ENCODE measurements at regions of chr17 and their contacts with region 1.

Region 1: DNA sequence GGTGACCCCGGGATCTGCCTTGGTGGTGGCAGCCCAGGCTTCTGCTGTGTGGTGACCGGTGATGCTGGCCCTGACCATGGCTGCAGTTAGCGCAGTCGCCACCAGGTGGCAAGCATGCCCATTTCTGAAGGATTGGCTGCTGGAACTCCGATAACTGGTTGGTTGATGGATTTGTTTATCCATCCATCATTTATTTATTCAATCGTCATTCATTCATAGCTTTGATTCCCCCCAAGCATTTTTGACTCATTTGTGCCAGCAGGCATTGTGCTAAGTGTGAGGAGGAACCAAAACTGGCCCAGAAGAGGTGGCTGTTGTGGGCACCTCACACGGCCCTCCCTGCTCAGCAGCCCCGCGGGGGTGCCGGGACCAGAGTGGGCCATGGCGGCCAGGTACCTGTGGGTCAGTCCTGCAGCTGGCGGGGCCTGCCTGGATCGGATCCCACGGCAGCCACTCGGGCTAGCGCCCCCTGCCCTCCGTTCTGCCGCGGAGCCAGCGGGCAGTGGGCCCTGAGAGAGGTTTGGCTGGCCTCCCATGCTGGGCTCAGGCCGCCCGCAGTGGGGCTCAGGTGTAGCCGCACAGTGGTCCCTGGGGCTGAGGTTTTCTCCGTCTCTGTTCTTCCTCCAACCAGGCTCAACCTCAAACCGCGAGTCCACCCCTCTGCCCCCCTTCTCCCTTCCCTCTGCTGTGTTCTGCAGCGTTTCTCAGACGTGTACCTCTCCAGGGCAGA is 28.8 kb upstream of the ITGA3 start:
- DNase-seq: peak; percentile 79 to 87
- ATAC-seq: peak; percentile 75 to 89 (median 82)
- H3K4me3 ChIP-seq: peak overlapping the region in 5 of 10 donors; percentile 13 to 37 (median 28)
- H3K27ac ChIP-seq: peak overlapping the region in 1 of 10 donors; percentile 36
- H3K4me1 ChIP-seq: peaks cover 5 to 33% (median 18%) of the 10 kb centered on the region in 9 donors
- H3K27me3 ChIP-seq: peaks cover 0 to 20% (median 6%) of the 10 kb centered on the region in 7 donors
- CTCF ChIP-seq: peak; percentile 89 to 98 (median 94)

Region 2: GRCh38 chr17:50055426-50056230 is 28.6 kb after region 1 on chr17 and contains the start of gene ITGA3:
- intact Hi-C with region 1: loop called in 2 of 10 experiments (anchors 1 to 2 kb)
- DNase-seq: peak; percentile 75 to 78
- ATAC-seq: peak; percentile 56 to 77 (median 72)
- H3K4me3 ChIP-seq: peak within 1 kb of the TSS; percentile 61 to 97 (median 80)
- H3K27ac ChIP-seq: peak within 1 kb of the TSS; percentile 57 to 97 (median 90)
- H3K4me1 ChIP-seq: peaks cover 27 to 85% (median 71%) of the 10 kb centered on the region in 9 donors
- H3K27me3 ChIP-seq: peaks cover 0 to 38% (median 0%) of the 10 kb centered on the region in 7 donors
- CTCF ChIP-seq: peak in 1 of 9 donors; percentile 2
- total RNA-seq, gene ITGA3: 12.5 to 44.2 (median 22.5) TPM

Region 3: GRCh38 chr17:50066995-50067394 is 39.9 kb after region 1 on chr17:
- intact Hi-C with region 1: no loop called
- DNase-seq: no peak
- ATAC-seq: no peak
- H3K4me3 ChIP-seq: no peak overlapping the region
- H3K27ac ChIP-seq: peak overlapping the region in 7 of 10 donors; percentile 22 to 97 (median 91)
- H3K4me1 ChIP-seq: peaks cover 26 to 58% (median 49%) of the 10 kb centered on the region in 9 donors
- H3K27me3 ChIP-seq: no peaks in the 10 kb centered on the region
- CTCF ChIP-seq: no peak

Region 4: DNA sequence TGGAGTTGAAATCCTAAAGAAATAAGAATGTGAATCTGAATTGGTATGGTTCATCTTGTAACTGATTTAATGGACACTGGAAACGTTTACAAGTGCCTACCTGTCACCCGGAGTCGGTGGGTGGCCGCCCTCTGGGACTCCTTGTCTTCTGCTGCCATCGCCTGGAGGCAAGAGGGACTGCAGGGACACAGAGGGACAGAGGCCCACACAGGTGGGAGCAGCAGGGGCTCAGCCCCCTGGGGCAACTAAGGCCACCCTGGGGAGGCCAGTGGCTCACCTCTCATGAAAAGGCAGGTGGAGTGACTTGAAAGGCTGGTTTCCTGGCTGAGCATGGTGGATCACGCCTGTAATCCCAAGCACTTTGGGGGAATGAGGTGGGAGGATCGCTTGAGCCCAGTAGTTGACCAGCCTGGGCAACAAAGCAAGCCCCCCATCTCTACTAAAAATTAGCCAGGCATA is 270.4 kb after region 1 on chr17:
- intact Hi-C with region 1: loop called in 4 of 10 experiments (anchors 5 to 10 kb)
- DNase-seq: peak; percentile 71 to 77
- ATAC-seq: peak; percentile 81 to 96 (median 92)
- H3K4me3 ChIP-seq: no peak overlapping the region
- H3K27ac ChIP-seq: no peak overlapping the region
- H3K4me1 ChIP-seq: peaks cover 0 to 3% (median 0%) of the 10 kb centered on the region in 9 donors
- H3K27me3 ChIP-seq: no peaks in the 10 kb centered on the region
- CTCF ChIP-seq: peak; percentile 83 to 98 (median 95)

Measured in heart right ventricle (tissue), 16 donors.